ENCODE measurements at regions of chr21 and their contacts with region 1.

Region 1: DNA sequence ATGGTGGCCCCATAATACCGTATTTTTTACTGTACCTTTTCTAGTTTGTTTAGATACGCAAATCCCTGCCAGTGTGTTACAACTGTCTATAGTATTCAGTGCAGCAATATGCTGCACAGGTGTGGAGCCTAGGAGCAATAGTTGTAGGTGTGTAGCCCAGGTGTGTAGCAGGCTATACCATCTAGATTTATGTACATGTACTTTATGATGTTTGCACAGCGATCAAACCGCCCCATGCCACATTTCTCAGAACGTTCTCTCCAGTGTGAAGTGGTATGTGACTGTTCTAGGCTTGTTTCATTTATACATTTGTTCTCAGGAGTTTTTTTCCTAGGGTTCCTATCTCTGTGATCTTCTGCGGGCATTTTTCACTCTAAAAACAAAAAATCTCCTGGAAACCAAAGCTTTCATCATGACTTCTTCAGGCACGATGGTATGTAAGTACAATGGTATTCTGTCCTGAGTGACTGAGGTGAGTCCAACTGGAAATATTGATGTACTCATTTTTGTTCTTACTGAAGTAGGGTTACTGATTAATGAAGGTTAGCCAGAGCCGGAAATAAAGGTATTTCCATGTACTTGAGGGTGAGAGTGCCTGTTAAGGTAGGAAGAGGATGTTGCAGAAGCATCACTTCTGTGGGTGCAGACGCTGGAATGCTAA is 153.0 kb downstream of the GABPA start:
- DNase-seq: peak; percentile 5
- H3K4me3 Mint-ChIP-seq: peak overlapping the region; percentile 17
- H3K27ac Mint-ChIP-seq: peak overlapping the region; percentile 81
- H3K4me1 Mint-ChIP-seq: peaks cover 28% of the 10 kb centered on the region
- H3K27me3 Mint-ChIP-seq: no peaks in the 10 kb centered on the region
- CTCF ChIP-seq: no peak

Region 2: DNA sequence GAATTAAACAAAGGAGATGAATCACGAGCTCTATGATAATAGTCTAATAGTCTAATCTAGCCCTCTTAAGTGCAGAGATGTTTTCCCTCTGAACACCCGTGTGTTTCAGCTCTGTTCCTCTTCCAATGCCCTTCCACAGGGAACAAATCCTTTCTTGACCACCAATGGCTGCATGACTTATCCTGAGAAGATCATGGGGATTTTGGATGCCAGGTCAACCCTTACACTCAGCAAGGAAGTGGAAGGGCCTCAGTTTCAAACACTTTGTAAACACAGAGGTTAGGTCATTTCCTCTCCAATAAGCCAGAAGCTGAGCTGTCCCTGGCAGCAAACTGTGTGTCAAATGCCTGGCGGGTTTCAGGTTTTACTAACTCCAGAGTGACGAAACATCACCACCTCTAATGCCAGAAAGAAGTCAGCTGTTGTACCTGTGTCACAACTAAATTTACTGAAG is 47.0 kb after region 1 on chr21:
- CTCF ChIA-PET with region 1: no interaction called
- intact Hi-C with region 1: loop called (anchors 1 kb)
- DNase-seq: peak; percentile 61
- H3K4me3 Mint-ChIP-seq: peak overlapping the region; percentile 18
- H3K27ac Mint-ChIP-seq: peak overlapping the region; percentile 90
- H3K4me1 Mint-ChIP-seq: peaks cover 14% of the 10 kb centered on the region
- H3K27me3 Mint-ChIP-seq: no peaks in the 10 kb centered on the region
- CTCF ChIP-seq: no peak

Region 3: GRCh38 chr21:26351661-26352060 is 463.9 kb after region 1 on chr21:
- CTCF ChIA-PET with region 1: no interaction called
- intact Hi-C with region 1: no loop called
- DNase-seq: no peak
- H3K4me3 Mint-ChIP-seq: no peak overlapping the region
- H3K27ac Mint-ChIP-seq: no peak overlapping the region
- H3K4me1 Mint-ChIP-seq: no peaks in the 10 kb centered on the region
- H3K27me3 Mint-ChIP-seq: no peaks in the 10 kb centered on the region
- CTCF ChIP-seq: no peak

Measured in Calu3 (cell line).